ENCODE measurements at regions of chr10 and their contacts with region 1.

Region 1: DNA sequence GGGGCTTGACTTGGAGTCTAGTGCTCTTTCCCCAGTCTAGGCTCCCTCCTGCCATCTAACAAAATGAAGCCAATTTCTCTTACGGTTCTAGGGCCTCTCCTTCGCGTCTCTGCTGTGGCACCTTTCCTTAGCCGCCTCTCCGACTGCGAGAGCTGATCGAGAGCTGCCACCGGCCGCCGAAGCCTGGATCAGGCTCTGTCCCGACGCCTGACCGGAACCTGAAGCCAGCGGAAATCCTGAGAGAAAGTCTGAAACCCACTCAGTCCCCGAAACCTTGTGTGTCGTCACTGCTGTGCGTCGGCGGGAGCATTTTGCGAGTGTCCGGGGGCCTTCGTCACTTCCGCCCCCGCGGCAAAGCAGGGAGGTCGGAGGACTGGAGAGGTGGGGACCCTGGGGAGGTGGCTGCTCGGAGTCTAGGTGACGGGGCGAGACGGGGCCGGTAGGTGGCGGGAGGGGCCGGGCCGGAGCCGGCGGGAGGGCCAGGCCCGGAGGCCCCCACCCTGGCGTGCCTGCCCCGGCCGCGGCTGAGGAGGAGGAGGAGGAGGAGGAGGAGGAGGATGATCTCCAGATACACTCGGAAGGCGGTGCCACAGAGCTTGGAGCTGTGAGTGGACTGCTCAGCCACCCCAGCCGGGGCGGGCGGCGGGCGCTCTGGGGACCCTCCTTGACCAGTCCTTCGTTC is at the starts of genes ECD and FAM149B1:
- DNase-seq: peak; percentile 50
- H3K4me3 ChIP-seq: peak within 1 kb of the TSS; percentile 69 to 88 (median 76)
- H3K27ac ChIP-seq: peak within 1 kb of the TSS; percentile 95 to 98 (median 96)
- H3K4me1 ChIP-seq: peaks cover 14 to 58% (median 16%) of the 10 kb centered on the region in 3 donors
- H3K27me3 ChIP-seq: no peaks in the 10 kb centered on the region
- CTCF ChIP-seq: peak in 3 of 6 experiments; percentile 24 to 56 (median 48)
- POLR2A ChIP-seq: peak in 3 of 4 donors; percentile 88 to 94 (median 92)
- total RNA-seq, gene ECD: 17.4 to 25.3 (median 24.0) TPM
- total RNA-seq, gene FAM149B1: 8.7 to 15.8 (median 10.8) TPM

Region 2: DNA sequence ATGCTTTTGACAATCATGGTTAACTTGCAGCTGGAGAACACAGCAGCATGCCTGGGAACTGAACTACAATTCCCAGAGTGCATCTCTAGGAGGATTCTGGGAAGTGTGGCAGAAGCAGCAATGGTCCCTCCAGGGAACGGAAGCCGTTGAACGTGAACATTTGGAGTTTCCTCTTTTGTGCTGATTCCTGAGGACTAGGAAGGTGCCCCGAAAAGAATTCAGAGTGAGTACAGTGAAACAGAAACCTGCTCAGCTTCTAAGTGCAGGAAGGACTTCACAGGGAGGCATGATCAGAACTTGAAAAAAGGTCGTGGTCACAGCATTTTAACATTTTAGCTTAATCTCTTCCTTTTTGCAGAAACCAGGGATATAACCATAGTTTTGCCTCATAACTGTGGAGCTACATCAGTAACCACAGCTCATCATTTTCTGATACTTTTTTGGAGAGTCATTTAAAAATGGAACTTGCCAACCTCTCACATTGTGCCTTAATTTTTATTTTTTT is 57.5 kb before region 1 on chr10 and contains the start of gene NUDT13:
- intact Hi-C with region 1: loop called (anchors 10 kb)
- DNase-seq: no peak
- H3K4me3 ChIP-seq: peak within 1 kb of the TSS; percentile 33 to 69 (median 57)
- H3K27ac ChIP-seq: peak within 1 kb of the TSS; percentile 75 to 93 (median 89)
- H3K4me1 ChIP-seq: peaks cover 0 to 18% (median 0%) of the 10 kb centered on the region in 3 donors
- H3K27me3 ChIP-seq: no peaks in the 10 kb centered on the region
- CTCF ChIP-seq: peak in 1 of 6 experiments; percentile 12
- POLR2A ChIP-seq: peak in 1 of 4 donors; percentile 34
- total RNA-seq, gene NUDT13: 0.88 to 1.9 (median 1.3) TPM in 3 of 4 donors, not detected in the other

Measured in esophagus squamous epithelium (tissue), 5 donors.